ENCODE measurements at regions of chr15 and their contacts with region 1.

Region 1: GRCh38 chr15:96356494-96357455 is 26.3 kb downstream of the NR2F2 start:
- DNase-seq: peak; percentile 75 to 87
- H3K4me3 ChIP-seq: peak overlapping the region; percentile 61 to 75
- H3K27ac ChIP-seq: peak overlapping the region; percentile 97 to 99
- H3K4me1 ChIP-seq: peaks cover 0 to 73% (median 42%) of the 10 kb centered on the region in 4 donors
- H3K27me3 ChIP-seq: no peaks in the 10 kb centered on the region
- CTCF ChIP-seq: peak; percentile 93 to 96

Region 2: GRCh38 chr15:94670438-94671034 is 1686.2 kb before region 1 on chr15:
- intact Hi-C with region 1: loop called (anchors 10 kb)
- DNase-seq: no peak
- H3K4me3 ChIP-seq: no peak overlapping the region
- H3K27ac ChIP-seq: peak overlapping the region in 1 of 2 donors; percentile 57
- H3K4me1 ChIP-seq: peaks cover 0 to 21% (median 11%) of the 10 kb centered on the region in 4 donors
- H3K27me3 ChIP-seq: no peaks in the 10 kb centered on the region
- CTCF ChIP-seq: peak; percentile 74 to 85

Region 3: DNA sequence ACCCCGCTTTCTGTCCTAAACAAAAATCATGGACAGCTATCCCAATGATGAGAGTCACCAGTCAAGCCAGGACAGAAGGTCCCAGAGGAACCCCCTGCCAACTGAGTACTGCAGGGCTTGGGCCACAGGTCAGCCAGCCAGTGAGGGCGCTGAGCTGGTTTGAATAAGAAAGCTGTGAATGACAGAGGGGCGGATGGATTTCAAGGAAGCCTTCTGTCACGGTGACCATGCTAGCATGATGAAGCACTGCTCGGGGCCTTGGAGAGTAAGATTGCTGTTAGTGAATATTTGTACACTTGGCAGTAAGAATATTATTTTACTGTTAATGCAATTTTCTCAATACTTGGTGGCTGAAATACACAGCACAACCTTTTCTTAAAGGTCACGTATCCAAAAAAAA is 760.3 kb before region 1 on chr15:
- intact Hi-C with region 1: no loop called
- DNase-seq: peak in 1 of 2 donors; percentile 28
- H3K4me3 ChIP-seq: no peak overlapping the region
- H3K27ac ChIP-seq: peak overlapping the region in 1 of 2 donors; percentile 47
- H3K4me1 ChIP-seq: peaks cover 0 to 27% (median 7%) of the 10 kb centered on the region in 4 donors
- H3K27me3 ChIP-seq: no peaks in the 10 kb centered on the region
- CTCF ChIP-seq: no peak

Region 4: DNA sequence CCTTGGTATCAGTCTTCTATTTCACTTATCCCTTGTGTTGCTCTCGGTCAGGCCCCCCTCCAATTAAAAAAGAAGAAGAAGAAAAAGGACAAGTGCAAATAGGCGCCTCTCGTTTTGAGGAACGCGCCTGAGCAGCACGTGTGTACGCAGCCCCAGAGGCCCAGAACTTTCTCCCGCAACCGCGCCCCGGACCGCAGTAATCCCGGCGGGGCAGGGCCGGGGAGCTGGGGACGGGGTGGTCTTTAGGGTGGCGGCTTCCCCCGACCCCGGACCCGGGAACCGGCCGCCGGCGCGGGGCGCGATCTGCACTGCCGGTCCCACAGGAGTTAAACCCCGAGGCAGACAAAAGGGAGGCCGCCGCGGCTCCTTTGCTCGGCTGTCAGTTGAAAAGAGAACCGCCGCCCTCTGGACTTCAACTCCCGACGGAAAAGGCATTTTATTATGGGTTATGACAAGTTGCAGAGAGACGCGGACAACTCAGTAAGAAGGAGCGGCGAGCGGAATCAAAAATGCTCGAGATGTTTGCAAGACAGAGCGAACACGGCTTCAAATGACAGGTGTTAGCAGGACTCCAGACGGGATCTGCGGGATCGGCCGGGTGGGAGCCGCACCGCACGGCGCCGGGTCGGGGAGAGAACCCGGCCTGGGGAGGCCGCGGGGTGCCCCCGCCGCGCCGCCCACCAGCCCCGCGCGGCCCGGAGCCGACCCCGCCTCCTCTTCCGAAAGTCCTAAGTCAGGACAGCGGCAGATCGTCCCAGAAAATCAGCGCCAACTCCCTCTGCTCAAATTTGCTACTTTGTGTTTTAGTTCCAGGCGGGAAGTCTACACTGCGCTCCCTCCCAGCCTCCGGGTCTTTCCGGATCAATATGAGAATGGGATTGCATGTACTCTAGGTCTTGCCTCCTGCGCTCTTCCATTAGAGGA is 52.7 kb after region 1 on chr15:
- intact Hi-C with region 1: loop called (anchors 5 kb)
- DNase-seq: no peak
- H3K4me3 ChIP-seq: peak overlapping the region; percentile 25 to 50
- H3K27ac ChIP-seq: no peak overlapping the region
- H3K4me1 ChIP-seq: peaks cover 0 to 20% (median 16%) of the 10 kb centered on the region in 4 donors
- H3K27me3 ChIP-seq: peaks cover 13 to 72% of the 10 kb centered on the region in 2 donors
- CTCF ChIP-seq: no peak

Region 5: DNA sequence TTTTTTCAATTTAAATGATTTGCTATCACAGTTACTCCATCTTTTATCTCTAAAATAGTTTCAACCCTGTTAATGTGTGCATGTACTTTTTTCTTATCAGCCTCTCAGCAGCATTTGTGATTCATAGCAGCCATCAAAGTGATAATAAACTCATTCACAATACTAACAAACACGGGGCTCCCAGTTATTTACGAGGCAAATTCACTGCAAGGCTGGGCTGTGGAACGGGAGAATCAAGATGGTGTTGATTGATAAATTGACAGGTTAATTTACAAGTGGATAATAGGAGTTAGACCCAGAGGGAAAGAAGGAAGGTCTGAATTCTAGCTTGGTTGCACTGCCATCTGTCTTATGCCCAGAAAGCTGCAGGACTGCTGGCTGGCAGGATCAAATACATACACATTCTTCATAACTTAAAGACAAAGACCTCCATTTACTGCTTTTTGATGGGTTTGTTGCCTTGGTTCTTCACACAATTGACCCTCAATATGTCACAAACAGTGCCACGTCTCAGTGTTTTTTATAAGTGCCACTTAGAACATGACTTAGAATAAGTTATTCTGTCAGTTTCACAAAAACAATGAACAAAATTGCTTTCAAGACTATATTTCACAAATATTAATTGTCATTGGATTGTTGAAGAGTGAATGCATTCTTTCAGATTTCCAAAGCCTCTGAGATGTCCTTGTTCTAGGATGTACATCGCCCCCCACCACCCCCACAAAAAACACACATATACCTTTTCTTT is 536.6 kb after region 1 on chr15:
- intact Hi-C with region 1: loop called (anchors 5 kb)
- DNase-seq: no peak
- H3K4me3 ChIP-seq: no peak overlapping the region
- H3K27ac ChIP-seq: no peak overlapping the region
- H3K4me1 ChIP-seq: peaks cover 0 to 32% (median 0%) of the 10 kb centered on the region in 4 donors
- H3K27me3 ChIP-seq: no peaks in the 10 kb centered on the region
- CTCF ChIP-seq: peak; percentile 54 to 63

Region 6: GRCh38 chr15:97759363-97759762 is 1402.6 kb after region 1 on chr15:
- intact Hi-C with region 1: loop called (anchors 5 kb)
- DNase-seq: no peak
- H3K4me3 ChIP-seq: no peak overlapping the region
- H3K27ac ChIP-seq: no peak overlapping the region
- H3K4me1 ChIP-seq: no peaks in the 10 kb centered on the region
- H3K27me3 ChIP-seq: peaks cover 0 to 2% of the 10 kb centered on the region in 2 donors
- CTCF ChIP-seq: no peak

Measured in tibial artery (tissue), 4 donors.